Body of pancreas (tissue), 4 donors: ENCODE measurements at regions of chr10 and their contacts with region 1.

Region 1: GRCh38 chr10:44733501-44734488 is 177.3 kb upstream of the TMEM72 start:
- DNase-seq: peak in 3 of 4 donors; percentile 55 to 66 (median 61)
- ATAC-seq: peak; percentile 76
- H3K4me3 ChIP-seq: no peak overlapping the region
- H3K27ac ChIP-seq: peak overlapping the region in 3 of 4 donors; percentile 29 to 60 (median 42)
- H3K4me1 ChIP-seq: peaks cover 28% of the 10 kb centered on the region
- H3K27me3 ChIP-seq: no peaks in the 10 kb centered on the region
- CTCF ChIP-seq: peak in 6 of 7 experiments; percentile 29 to 51 (median 40)
- POLR2A ChIP-seq: no peak

Region 2: DNA sequence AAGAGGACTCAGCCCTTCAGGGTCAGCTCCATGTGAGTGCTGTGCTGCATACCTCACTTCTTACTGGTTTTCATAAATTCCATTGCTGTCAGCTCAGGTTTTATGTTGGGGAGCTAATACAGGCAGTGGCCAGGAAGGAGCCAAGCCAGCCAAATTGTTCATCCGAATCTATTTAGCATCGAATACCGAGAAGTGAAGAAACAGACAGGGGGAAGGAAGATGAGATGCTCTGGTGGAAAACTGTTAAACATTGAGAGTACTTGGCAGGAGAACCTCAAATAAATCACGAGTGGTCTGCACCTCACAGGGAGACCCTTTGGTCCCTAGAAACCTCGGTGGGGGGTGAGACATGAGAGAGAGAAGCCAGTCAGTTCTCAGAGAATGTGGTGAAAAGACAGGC is 18.7 kb before region 1 on chr10:
- intact Hi-C with region 1: no loop called
- DNase-seq: no peak
- ATAC-seq: no peak
- H3K4me3 ChIP-seq: no peak overlapping the region
- H3K27ac ChIP-seq: no peak overlapping the region
- H3K4me1 ChIP-seq: peaks cover 26% of the 10 kb centered on the region
- H3K27me3 ChIP-seq: no peaks in the 10 kb centered on the region
- CTCF ChIP-seq: no peak
- POLR2A ChIP-seq: no peak

Region 3: DNA sequence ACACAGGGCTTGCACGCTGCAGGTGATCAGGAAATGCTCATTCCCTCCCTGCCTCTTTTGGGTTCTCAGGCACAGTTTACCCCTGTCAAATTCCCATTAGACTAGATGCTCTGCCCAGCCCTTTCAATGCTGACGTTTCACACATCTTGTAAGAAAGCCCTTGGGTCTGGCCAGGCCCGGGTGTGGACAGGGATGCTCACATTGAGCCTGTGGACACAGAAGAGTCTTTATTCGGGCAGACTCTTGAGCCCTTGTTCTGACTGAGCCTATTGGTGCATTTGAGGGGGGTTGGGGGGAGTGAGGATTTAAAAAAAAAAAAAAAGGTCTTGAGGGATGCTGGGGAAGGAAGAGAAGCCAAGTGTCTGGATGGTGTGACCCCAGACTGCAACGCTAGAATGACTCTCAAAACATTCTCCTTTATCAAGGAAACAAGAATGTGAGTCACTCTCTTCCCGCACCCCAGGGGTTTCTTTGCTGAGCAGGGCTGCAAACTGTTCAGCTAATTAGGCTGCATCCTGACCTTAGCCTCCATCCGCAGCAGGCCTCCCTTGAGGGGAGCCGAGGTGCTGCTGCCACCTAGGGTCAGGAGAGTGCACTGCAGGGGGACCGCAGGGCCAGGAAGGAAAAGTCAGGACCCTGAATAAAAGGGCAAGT is 123.7 kb after region 1 on chr10:
- intact Hi-C with region 1: loop called (anchors 5 kb)
- DNase-seq: peak; percentile 59 to 71 (median 66)
- ATAC-seq: peak; percentile 82
- H3K4me3 ChIP-seq: no peak overlapping the region
- H3K27ac ChIP-seq: no peak overlapping the region
- H3K4me1 ChIP-seq: no peaks in the 10 kb centered on the region
- H3K27me3 ChIP-seq: no peaks in the 10 kb centered on the region
- CTCF ChIP-seq: peak; percentile 91 to 99 (median 95)
- POLR2A ChIP-seq: no peak